WTC11 (cell line): ENCODE measurements at regions of chr12 and their contacts with region 1.

Region 1: DNA sequence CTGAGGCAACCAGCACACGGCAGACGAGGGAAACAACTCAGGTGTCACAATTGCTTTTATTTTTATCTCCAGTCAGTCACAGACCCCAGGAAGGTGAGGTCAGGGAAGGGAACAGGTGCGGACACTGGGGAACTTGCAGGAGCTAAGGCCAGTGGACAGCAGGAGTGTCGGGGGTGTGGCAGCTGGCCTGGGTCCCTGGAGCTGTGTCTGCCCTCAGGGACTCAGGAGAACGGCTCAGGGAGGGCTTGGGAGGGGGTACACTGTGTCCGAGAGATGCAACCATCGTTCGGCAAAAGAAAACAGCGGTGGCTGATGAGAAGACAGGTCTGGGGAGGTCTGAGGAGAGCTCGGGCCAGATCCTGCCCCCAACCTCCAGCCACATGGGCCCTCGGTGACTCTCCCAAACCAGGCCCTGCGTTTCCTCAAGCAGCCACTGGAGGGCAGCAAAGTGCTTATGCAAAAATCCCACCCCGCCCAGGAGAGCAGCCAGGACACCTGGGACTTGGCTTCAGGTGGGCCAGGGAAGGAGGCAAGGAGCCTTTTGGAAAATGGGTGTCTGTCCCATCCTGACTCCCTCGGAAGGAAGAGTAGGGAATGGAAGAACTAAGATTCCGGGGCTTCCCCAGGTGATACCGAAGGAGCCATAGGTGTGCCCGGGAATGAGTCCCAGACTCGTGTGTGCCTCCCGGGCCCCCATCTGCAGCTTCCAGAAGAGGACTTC is 24.1 kb upstream of the BCDIN3D start:
- DNase-seq: peak; percentile 90
- ATAC-seq: peak; percentile 94
- H3K4me3 Mint-ChIP-seq: no peak overlapping the region
- H3K27ac Mint-ChIP-seq: no peak overlapping the region
- H3K4me1 Mint-ChIP-seq: peaks cover 9% of the 10 kb centered on the region
- H3K27me3 Mint-ChIP-seq: peaks cover 10% of the 10 kb centered on the region
- CTCF ChIP-seq: peak; percentile 96

Region 2: DNA sequence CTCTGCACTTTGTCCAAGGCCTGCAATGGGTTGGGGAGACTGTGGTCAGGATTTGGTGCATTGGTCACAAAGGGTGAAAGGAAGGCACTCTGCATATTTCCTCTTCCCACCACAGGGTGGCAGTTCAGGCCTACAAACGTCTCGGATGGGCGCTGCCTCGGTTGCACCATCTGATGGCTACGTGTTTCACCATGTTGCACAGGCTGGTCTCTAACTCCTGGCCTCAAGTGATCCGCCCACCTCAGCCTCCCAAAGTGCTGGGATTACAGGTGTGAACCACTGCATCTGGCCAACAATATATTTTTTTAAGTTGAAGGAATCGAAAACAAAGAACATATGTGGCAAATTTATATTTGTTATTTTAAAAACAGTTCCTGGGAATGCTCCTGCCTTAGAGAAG is 90.6 kb before region 1 on chr12:
- CTCF ChIA-PET with region 1: interaction called, 18 read pairs
- POLR2A ChIA-PET with region 1: no interaction called
- DNase-seq: peak; percentile 72
- ATAC-seq: peak; percentile 89
- H3K4me3 Mint-ChIP-seq: no peak overlapping the region
- H3K27ac Mint-ChIP-seq: no peak overlapping the region
- H3K4me1 Mint-ChIP-seq: peaks cover 17% of the 10 kb centered on the region
- H3K27me3 Mint-ChIP-seq: peaks cover 20% of the 10 kb centered on the region
- CTCF ChIP-seq: peak; percentile 50

Region 3: GRCh38 chr12:49882851-49883470 is 15.9 kb after region 1 on chr12:
- CTCF ChIA-PET with region 1: interaction called, 11 read pairs
- POLR2A ChIA-PET with region 1: no interaction called
- DNase-seq: peak; percentile 46
- ATAC-seq: peak; percentile 70
- H3K4me3 Mint-ChIP-seq: no peak overlapping the region
- H3K27ac Mint-ChIP-seq: no peak overlapping the region
- H3K4me1 Mint-ChIP-seq: peaks cover 43% of the 10 kb centered on the region
- H3K27me3 Mint-ChIP-seq: no peaks in the 10 kb centered on the region
- CTCF ChIP-seq: no peak

Region 4: GRCh38 chr12:49903695-49904423 is 36.8 kb after region 1 on chr12 and contains the start of gene FAIM2:
- CTCF ChIA-PET with region 1: interaction called, 14 read pairs
- POLR2A ChIA-PET with region 1: no interaction called
- DNase-seq: peak; percentile 54
- ATAC-seq: peak; percentile 38
- H3K4me3 Mint-ChIP-seq: peak within 1 kb of the TSS; percentile 66
- H3K27ac Mint-ChIP-seq: no peak within 1 kb of the TSS
- H3K4me1 Mint-ChIP-seq: peaks cover 8% of the 10 kb centered on the region
- H3K27me3 Mint-ChIP-seq: peaks cover 37% of the 10 kb centered on the region
- CTCF ChIP-seq: no peak
- total RNA-seq, gene FAIM2: 0.18 to 0.30 TPM (median 0.22 TPM) in 3 replicates

Region 5: DNA sequence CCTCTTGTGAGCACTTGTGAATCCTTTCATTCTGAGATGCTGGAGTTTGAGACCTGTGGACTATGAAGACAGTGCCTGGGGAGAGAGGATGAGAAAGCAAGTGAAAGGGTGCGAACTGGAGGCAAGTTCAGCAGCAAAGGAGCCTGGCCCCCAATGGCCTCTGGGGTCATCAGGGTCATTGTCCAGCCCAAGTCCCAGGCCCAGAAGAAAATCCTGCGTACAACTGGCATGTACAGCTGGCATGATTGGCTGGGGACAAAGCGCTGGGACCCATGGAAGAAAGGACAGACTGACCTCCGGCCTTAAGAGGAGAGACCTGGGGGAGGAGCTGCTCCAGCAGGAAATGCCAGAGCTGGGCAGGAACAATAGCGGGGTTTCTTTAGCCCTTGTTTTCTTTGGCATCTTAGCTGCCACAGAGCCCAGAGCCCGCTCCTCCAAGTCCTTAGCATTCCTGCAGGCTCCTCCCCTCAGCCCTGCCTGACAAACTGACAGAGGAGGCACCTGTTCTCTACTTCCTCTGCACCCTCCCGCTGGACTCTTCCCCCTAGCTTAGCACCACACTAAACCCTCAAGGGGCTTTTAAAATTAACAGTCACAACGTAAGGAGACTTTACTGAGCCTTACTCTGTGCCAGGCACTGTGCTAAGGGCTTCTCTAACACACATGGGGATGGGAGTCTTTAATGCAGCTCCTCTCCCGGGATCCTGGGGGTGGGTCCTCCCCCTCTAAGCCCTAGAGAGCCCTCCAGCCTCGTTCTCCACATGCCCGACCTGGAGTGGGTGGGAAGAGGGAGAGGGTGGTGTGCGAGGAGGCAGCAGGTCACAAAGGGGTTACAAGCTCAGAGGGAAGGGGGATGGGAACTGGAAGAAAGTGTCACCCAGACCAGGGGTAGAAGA is 92.8 kb after region 1 on chr12:
- CTCF ChIA-PET with region 1: interaction called, 17 read pairs
- POLR2A ChIA-PET with region 1: no interaction called
- DNase-seq: peak; percentile 61
- ATAC-seq: peak; percentile 72
- H3K4me3 Mint-ChIP-seq: peak overlapping the region; percentile 65
- H3K27ac Mint-ChIP-seq: no peak overlapping the region
- H3K4me1 Mint-ChIP-seq: peaks cover 24% of the 10 kb centered on the region
- H3K27me3 Mint-ChIP-seq: peaks cover 69% of the 10 kb centered on the region
- CTCF ChIP-seq: no peak